AG04449 (cell line): ENCODE measurements at regions of chr22 and their contacts with region 1.

Region 1: GRCh38 chr22:41543854-41544670 is at the start of gene POLR3H:
- DNase-seq: peak; percentile 72
- H3K4me3 ChIP-seq: peak within 1 kb of the TSS; percentile 91
- CTCF ChIP-seq: peak; percentile 78

Region 2: GRCh38 chr22:41274856-41275255 is 269.2 kb before region 1 on chr22:
- CTCF ChIA-PET with region 1: no interaction called
- POLR2A ChIA-PET with region 1: no interaction called
- DNase-seq: no peak
- H3K4me3 ChIP-seq: no peak overlapping the region
- CTCF ChIP-seq: no peak

Region 3: DNA sequence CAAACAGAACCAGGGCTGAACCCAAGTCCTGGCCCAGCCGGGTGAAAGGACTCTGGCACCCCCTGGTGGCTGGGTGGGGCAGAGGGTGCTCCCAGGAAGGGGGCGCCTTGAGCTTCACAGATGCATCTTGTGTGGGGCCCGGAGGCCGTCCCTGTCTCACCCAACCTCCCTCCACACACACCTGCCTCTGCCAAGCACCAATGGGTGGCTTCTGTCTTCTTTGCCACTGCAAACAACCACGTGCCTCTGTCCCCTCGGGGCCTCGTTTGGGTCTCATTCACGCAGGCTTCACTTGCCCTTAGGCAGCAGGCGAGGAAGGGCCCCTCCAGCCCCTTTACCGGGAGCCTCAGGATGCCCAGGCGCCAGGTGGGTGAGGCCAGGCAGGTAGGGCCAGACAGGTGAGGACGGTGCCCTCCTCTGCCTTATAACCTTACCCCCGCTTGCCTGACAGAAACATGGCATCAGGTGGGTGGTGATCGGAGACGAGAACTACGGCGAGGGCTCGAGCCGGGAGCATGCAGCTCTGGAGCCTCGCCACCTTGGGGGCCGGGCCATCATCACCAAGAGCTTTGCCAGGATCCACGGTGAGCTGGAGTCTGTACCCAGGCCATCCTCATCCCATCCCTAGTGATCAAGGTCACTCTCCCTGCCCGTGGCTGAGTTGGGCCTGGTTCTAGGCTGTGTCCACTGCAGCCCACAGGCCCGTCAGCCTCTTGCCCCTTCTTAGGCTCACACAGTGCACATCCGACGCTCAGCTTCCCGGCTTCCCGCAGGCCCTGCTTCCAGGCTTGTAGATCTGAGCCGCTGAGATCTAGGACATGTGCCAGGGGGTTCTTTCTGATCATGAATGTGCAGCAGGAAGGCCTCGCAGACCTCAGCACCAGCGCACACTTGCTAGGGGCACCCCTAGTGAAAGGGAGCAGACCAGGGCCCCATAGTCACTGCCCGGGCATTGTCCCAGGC is 16.9 kb before region 1 on chr22:
- CTCF ChIA-PET with region 1: interaction called, 41 read pairs
- POLR2A ChIA-PET with region 1: no interaction called
- DNase-seq: no peak
- H3K4me3 ChIP-seq: no peak overlapping the region
- CTCF ChIP-seq: peak; percentile 88

Region 4: DNA sequence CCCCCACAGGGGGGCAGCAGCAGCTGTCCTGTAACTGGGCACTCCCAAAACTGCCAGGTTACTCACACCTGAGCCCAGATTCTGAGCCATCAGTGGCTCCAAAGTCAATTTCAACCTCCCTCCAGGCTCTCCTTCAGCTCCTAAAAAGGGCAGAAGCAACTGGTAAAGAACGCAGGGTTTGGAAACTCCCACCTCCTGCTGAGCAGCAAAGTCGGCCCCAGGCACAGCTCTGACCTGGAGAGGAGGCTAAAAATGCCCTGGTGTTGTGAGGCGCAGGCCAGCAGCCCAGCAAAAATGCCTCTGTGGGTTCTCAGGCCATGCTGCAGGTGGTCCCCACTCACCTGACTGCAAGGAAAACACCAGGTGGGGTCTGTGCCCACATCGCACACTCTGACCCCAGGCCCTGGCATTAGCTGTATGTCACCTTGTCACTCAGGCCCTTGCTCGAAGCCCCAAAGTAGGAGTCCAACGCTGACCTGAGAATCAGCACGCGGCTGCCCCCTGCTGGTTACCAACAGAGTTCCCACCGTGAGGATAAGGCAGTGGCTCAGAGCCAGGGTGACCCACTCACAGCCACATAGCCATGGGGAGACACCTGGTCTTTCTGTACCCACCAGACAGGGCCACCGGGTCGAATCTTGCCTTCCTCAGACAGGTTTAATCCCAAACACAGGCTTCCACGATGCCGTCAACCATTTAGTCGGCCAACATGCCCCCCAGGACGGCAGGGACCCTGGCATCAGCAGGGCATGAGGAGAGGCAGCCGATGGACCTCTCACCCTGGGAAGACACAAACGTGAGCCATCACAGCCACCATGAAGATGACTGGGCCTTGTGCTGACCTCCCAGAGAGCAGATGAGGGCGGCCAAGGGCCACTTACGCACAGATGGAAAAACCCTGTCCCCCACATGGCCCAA is 10.9 kb before region 1 on chr22:
- CTCF ChIA-PET with region 1: interaction called, 41 read pairs
- POLR2A ChIA-PET with region 1: no interaction called
- DNase-seq: no peak
- H3K4me3 ChIP-seq: no peak overlapping the region
- CTCF ChIP-seq: peak; percentile 85

Region 5: DNA sequence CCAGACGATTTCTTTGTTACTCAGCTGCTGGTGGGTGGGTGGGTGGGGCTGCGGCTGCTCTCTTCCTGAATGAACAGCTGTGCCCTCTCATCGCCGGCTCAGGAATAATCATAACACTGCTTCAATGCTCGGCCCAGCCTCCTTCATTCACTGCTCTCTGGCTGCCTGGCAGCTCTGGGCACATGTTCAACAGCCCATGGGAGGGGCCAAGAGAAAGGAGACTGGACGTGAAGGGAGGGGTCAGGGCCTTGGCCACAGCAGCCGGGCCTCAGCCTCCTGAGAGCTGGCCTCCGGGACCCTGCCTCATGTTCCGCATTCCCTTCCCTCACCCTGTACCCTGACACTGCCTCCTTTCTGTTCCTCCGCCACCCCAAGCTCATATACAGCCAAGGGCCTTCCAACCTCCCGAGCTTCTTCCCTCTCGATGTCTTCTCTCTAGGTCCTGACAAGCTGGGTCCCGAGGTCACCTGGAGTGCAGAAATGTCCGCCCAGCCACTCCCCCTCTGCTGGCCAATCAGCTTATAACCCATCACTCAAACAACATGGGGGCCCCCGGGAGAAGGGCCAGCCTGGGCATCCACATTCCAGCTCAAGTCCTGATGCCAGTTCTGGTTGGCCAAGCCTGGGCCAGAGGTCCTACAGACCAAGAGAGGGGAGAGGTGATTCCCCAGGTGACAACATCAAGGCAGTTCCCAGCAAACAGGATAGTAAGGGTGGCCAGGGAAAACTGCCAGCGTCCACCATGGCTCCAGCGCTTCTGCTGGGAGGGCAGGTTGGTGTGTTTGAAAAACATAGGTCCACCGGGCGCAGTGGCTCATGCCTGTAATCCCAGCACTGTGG is 13.6 kb after region 1 on chr22:
- CTCF ChIA-PET with region 1: interaction called, 19 read pairs
- POLR2A ChIA-PET with region 1: interaction called, 3 read pairs
- DNase-seq: no peak
- H3K4me3 ChIP-seq: no peak overlapping the region
- CTCF ChIP-seq: no peak

Region 6: GRCh38 chr22:41589391-41590241 is 45.6 kb after region 1 on chr22 and contains the start of gene PMM1:
- CTCF ChIA-PET with region 1: interaction called, 17 read pairs
- POLR2A ChIA-PET with region 1: interaction called, 8 read pairs
- DNase-seq: peak; percentile 95
- H3K4me3 ChIP-seq: peak within 1 kb of the TSS; percentile 97
- CTCF ChIP-seq: no peak